CD8-positive, alpha-beta T cell (primary cell): ENCODE measurements at regions of chr12 and their contacts with region 1.

Region 1: DNA sequence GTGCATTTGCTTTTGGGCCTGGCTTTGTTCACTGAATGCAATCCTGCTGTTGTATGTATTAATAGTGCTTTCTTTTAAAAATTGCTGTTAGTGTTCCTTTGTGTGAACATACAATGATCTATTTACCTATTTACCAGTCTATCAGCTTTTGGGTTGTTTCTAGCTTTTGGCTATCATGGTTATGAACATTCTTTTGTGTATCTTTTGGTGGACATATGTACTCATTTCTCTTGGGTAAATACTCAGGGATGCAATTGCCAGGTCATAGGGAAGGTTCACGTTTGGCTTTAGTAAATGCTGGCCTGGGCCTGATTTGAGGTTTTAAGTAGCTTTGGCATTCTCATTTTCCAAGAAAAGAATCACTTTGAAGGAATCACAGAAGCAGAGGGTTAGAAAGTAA is 217.3 kb downstream of the ATP23 start:
- DNase-seq: no peak
- ATAC-seq: no peak
- H3K4me3 ChIP-seq: no peak overlapping the region
- H3K4me3 Mint-ChIP-seq: no peak overlapping the region
- H3K27ac ChIP-seq: no peak overlapping the region
- H3K27ac Mint-ChIP-seq: no peak overlapping the region
- H3K4me1 ChIP-seq: no peaks in the 10 kb centered on the region
- H3K4me1 Mint-ChIP-seq: no peaks in the 10 kb centered on the region
- H3K27me3 ChIP-seq: no peaks in the 10 kb centered on the region
- H3K27me3 Mint-ChIP-seq: peaks cover 22% of the 10 kb centered on the region
- CTCF ChIP-seq: no peak

Region 2: DNA sequence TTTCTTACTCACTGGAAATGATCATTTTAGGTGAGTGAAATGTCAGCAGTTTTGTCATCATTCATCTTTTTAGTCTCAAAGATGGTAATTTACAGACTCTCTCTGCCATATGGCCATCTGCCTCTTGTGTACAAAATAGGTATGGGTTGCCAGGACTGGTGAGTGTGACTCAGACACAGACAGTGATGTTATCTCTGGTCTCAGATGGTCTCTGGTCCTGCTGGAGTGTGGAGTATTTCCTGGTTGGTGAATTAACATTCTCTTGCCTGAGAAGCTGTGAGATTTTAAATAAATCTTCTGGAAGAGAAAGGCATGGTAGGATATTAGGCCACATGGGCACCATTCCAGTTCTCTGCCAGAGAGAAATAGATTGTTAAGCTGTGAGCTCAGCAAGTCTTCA is 10.3 kb before region 1 on chr12:
- CTCF ChIA-PET with region 1: no interaction called
- POLR2A ChIA-PET with region 1: no interaction called
- intact Hi-C with region 1: loop called in 1 of 2 experiments (anchors 1 kb)
- DNase-seq: no peak
- ATAC-seq: no peak
- H3K4me3 ChIP-seq: no peak overlapping the region
- H3K4me3 Mint-ChIP-seq: no peak overlapping the region
- H3K27ac ChIP-seq: no peak overlapping the region
- H3K27ac Mint-ChIP-seq: no peak overlapping the region
- H3K4me1 ChIP-seq: no peaks in the 10 kb centered on the region
- H3K4me1 Mint-ChIP-seq: no peaks in the 10 kb centered on the region
- H3K27me3 ChIP-seq: no peaks in the 10 kb centered on the region
- H3K27me3 Mint-ChIP-seq: peaks cover 9% of the 10 kb centered on the region
- CTCF ChIP-seq: no peak

Region 3: GRCh38 chr12:58341782-58342181 is 183.1 kb after region 1 on chr12:
- CTCF ChIA-PET with region 1: no interaction called
- POLR2A ChIA-PET with region 1: no interaction called
- intact Hi-C with region 1: no loop called
- DNase-seq: no peak
- ATAC-seq: no peak
- H3K4me3 ChIP-seq: no peak overlapping the region
- H3K4me3 Mint-ChIP-seq: no peak overlapping the region
- H3K27ac ChIP-seq: no peak overlapping the region
- H3K27ac Mint-ChIP-seq: no peak overlapping the region
- H3K4me1 ChIP-seq: no peaks in the 10 kb centered on the region
- H3K4me1 Mint-ChIP-seq: no peaks in the 10 kb centered on the region
- H3K27me3 ChIP-seq: no peaks in the 10 kb centered on the region
- H3K27me3 Mint-ChIP-seq: peaks cover 9% of the 10 kb centered on the region
- CTCF ChIP-seq: no peak